ENCODE measurements at regions of chr5 and their contacts with region 1.

Region 1: GRCh38 chr5:143824851-143825720 is 13.1 kb downstream of the HMHB1 start:
- DNase-seq: peak; percentile 92
- H3K4me3 ChIP-seq: no peak overlapping the region
- H3K27ac ChIP-seq: no peak overlapping the region
- H3K4me1 ChIP-seq: peaks cover 0 to 24% (median 3%) of the 10 kb centered on the region in 6 donors
- H3K27me3 ChIP-seq: no peaks in the 10 kb centered on the region
- CTCF ChIP-seq: peak; percentile 83 to 96 (median 94)
- POLR2A ChIP-seq: no peak

Region 2: GRCh38 chr5:143016777-143017516 is 808.1 kb before region 1 on chr5:
- intact Hi-C with region 1: loop called (anchors 10 kb)
- DNase-seq: no peak
- H3K4me3 ChIP-seq: no peak overlapping the region
- H3K27ac ChIP-seq: no peak overlapping the region
- H3K4me1 ChIP-seq: peaks cover 0 to 20% (median 6%) of the 10 kb centered on the region in 6 donors
- H3K27me3 ChIP-seq: no peaks in the 10 kb centered on the region
- CTCF ChIP-seq: peak in 8 of 11 experiments; percentile 14 to 54 (median 38)
- POLR2A ChIP-seq: no peak

Region 3: DNA sequence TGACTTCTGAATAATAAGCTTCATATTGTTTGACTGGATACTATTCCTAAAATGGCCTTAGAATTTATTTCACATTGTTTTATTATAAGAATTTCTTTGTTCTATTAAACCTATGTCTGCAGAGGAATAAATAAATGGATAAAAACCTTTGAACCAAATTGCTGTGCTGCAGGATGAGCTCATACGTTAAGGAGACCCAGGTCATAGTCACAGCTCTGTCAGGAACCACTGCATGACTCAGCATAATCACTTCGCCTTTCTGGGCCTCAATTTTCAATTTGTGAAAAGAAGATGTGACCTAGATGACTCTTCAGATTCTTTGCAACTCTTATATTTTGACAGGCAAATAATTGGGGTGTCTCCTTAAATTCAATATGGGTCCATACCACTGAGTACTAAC is 49.8 kb before region 1 on chr5:
- intact Hi-C with region 1: no loop called
- DNase-seq: no peak
- H3K4me3 ChIP-seq: no peak overlapping the region
- H3K27ac ChIP-seq: no peak overlapping the region
- H3K4me1 ChIP-seq: no peaks in the 10 kb centered on the region
- H3K27me3 ChIP-seq: no peaks in the 10 kb centered on the region
- CTCF ChIP-seq: no peak
- POLR2A ChIP-seq: no peak

Measured in spleen (tissue), 13 donors.